ENCODE measurements at regions of chr5 and their contacts with region 1.

Region 1: DNA sequence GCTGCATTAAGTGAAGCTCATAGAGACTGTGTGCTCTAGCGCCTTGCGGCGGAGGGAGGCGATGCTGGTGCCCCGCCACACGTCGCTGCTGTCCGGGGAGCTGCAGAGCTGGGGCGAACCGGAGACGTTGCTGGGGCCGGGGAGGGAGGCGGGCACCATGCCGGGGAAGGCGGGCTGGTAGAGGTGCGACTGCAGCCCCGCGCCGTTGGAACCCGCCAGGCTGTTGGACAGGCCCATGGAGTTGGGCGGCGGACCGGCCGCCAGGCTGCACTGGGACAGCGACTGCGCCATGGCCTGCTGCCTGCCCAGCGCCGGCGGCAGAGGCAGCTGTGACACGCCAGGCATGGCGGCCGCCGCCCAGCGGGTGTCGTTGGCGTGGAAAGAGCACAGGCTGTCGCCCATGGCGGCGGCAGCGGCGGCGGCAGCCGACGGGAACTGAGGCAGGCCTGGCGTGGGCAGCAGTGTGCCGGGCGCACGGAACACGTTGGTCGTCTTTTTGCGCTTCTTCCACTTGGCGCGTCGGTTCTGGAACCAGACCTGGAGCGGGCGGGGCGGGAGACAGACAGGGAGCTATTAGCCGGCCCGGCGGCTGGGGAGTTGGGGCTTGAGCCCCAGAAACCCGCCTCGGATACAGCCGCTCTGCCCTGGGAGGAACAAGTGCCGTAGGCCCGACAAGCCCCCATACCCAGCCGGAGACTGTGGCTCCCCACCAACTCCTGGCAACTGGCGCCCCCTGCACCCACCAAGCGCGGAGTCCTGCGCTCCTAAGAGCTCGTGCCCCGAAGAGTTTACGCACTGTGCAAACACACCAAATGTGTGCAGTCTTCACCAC is 8.0 kb downstream of the OTP start:
- DNase-seq: peak; percentile 76
- ATAC-seq: peak; percentile 72
- H3K4me3 Mint-ChIP-seq: peak overlapping the region; percentile 63
- H3K27ac Mint-ChIP-seq: no peak overlapping the region
- H3K4me1 Mint-ChIP-seq: peaks cover 35% of the 10 kb centered on the region
- H3K27me3 Mint-ChIP-seq: peaks cover 100% of the 10 kb centered on the region
- CTCF ChIP-seq: no peak

Region 2: DNA sequence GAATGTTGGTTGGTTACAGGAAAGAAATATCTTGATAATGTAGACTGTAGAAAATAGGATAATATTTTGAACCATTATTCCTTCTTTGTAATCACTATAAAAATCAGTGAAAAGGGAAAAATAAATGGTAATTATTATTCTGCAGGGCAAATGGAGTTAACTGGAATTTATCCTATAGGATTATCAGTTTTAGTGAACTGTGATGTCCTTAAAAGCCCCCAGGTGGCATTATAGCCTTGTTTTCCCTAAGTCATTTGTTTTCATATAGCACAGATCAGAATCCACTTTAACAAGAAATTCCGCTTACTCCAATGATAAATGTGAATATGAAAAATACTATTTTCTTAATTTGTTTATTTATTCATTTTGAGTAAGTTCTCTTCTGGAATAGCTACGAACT is 112.2 kb before region 1 on chr5:
- CTCF ChIA-PET with region 1: no interaction called
- POLR2A ChIA-PET with region 1: no interaction called
- DNase-seq: no peak
- ATAC-seq: no peak
- H3K4me3 Mint-ChIP-seq: no peak overlapping the region
- H3K27ac Mint-ChIP-seq: no peak overlapping the region
- H3K4me1 Mint-ChIP-seq: no peaks in the 10 kb centered on the region
- H3K27me3 Mint-ChIP-seq: peaks cover 10% of the 10 kb centered on the region
- CTCF ChIP-seq: no peak

Region 3: DNA sequence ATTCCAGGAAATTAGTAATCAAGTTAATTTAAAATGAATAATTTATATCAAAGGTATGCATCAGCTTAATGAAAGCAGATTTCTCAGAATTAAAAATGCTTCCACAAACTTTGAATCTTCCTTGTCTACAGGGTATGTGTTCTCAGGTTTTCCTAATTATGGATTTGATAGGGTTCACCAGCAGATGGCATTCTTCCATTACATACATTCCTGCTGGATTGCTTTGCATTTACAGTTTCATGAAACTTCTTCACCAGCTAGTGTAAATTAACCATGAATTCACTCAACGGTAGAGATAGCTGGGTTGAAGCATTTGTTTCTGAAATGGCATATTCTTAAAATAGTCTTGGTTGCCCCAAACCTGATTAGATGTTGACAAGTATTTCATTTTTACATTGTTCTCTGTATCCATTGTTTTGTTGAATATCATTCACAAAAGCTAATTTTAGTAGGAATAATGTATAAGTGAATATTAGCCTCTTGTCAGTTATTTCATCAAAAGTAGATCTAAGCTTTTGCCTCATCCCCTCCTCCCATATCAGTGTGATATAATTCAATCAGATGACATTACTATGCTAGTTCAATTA is 69.7 kb before region 1 on chr5:
- CTCF ChIA-PET with region 1: interaction called, 15 read pairs
- POLR2A ChIA-PET with region 1: no interaction called
- DNase-seq: no peak
- ATAC-seq: peak; percentile 59
- H3K4me3 Mint-ChIP-seq: no peak overlapping the region
- H3K27ac Mint-ChIP-seq: no peak overlapping the region
- H3K4me1 Mint-ChIP-seq: 0 out of 2 replicates have a peak, but pooled peaks cover 2% of the 10 kb centered on the region
- H3K27me3 Mint-ChIP-seq: peaks cover 2% of the 10 kb centered on the region; the same call in 1 of the 2 replicates
- CTCF ChIP-seq: peak; percentile 38

Measured in WTC11 (cell line).